ENCODE measurements at regions of chrX and their contacts with region 1.

Region 1: DNA sequence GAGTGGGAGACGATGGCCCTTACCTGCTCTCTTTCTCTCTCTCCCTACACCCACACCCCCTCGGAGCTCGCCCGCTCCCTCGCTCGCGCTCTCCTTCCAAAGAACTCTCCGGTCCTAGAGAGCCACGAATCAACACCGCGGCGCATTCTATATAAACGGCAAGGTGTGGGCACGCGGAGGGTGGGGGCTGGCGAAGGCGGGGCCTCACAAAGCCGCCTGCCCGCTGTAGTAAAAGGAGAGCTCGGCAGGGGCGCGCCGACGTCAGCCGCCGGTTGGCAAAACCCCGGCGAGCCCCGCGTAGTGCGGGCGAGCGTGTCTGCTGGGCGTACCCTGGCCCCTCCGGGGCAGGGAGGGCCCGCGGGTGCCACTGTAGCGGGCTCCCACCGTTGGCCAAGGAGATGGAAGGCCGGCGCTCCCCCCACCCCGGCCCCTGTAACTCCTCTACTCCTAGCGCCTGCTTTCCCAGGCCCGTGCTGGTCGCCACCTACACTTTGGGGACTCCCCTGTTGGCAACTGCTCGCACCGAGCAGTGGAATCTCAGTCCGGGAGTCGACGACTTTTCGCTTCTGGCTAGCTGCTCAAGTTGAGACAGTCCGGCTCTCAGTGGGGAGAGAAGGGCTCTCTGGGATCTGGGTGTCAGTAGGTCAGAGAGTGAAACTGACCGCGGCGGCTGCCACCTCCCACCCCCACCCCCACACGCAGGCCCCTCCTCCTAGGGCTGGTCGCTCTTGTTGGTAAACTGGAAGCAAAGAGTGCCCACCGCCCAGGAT is 325.5 kb upstream of the F9 start:
- DNase-seq: peak; percentile 52 to 84
- ATAC-seq: peak; percentile 64 to 78
- H3K4me3 ChIP-seq: peak overlapping the region; percentile 62 to 70 (median 64)
- H3K27ac ChIP-seq: peak overlapping the region; percentile 83 to 93 (median 86)
- H3K4me1 ChIP-seq: peaks cover 15 to 18% of the 10 kb centered on the region in 2 donors
- H3K27me3 ChIP-seq: no peaks in the 10 kb centered on the region
- CTCF ChIP-seq: peak in 1 of 5 experiments; percentile 27
- POLR2A ChIP-seq: peak; percentile 84 to 85

Region 2: GRCh38 chrX:138925330-138925729 is 279.8 kb before region 1 on chrX:
- in situ Hi-C with region 1: no loop called
- intact Hi-C with region 1: loop called (anchors 5 kb)
- DNase-seq: peak; percentile 48 to 56
- ATAC-seq: peak; percentile 98 to 99
- H3K4me3 ChIP-seq: no peak overlapping the region
- H3K27ac ChIP-seq: peak overlapping the region; percentile 74 to 79 (median 75)
- H3K4me1 ChIP-seq: peaks cover 4 to 9% of the 10 kb centered on the region in 2 donors
- H3K27me3 ChIP-seq: no peaks in the 10 kb centered on the region
- CTCF ChIP-seq: no peak
- POLR2A ChIP-seq: no peak

Region 3: GRCh38 chrX:139058831-139059495 is 146.1 kb before region 1 on chrX:
- in situ Hi-C with region 1: no loop called
- intact Hi-C with region 1: no loop called
- DNase-seq: no peak
- ATAC-seq: no peak
- H3K4me3 ChIP-seq: no peak overlapping the region
- H3K27ac ChIP-seq: no peak overlapping the region
- H3K4me1 ChIP-seq: no peaks in the 10 kb centered on the region
- H3K27me3 ChIP-seq: no peaks in the 10 kb centered on the region
- CTCF ChIP-seq: no peak
- POLR2A ChIP-seq: no peak